ENCODE measurements at regions of chr12 and their contacts with region 1.

Region 1: GRCh38 chr12:120402217-120402616 is 33.3 kb upstream of the MSI1 start:
- DNase-seq: peak in 1 of 2 experiments; percentile 59
- H3K4me3 ChIP-seq: peak overlapping the region in 1 of 4 experiments; percentile 27; a peak in 1 of 8 replicates
- H3K27ac ChIP-seq: no peak overlapping the region
- H3K4me1 ChIP-seq: peaks cover 1 to 13% (median 6%) of the 10 kb centered on the region in 4 experiments
- H3K27me3 ChIP-seq: no peaks in the 10 kb centered on the region
- CTCF ChIP-seq: no peak
- EP300 ChIP-seq: no peak
- POLR2A ChIP-seq: no peak
- RAD21 ChIP-seq: no peak

Region 2: GRCh38 chr12:120249875-120250795 is 152.1 kb before region 1 on chr12:
- CTCF ChIA-PET with region 1: no interaction called
- POLR2A ChIA-PET with region 1: no interaction called
- DNase-seq: no peak
- H3K4me3 ChIP-seq: no peak overlapping the region
- H3K27ac ChIP-seq: no peak overlapping the region
- H3K4me1 ChIP-seq: peaks cover under 1 to 7% (median 2%) of the 10 kb centered on the region in 4 experiments; a peak in 6 of 7 replicates
- H3K27me3 ChIP-seq: no peaks in the 10 kb centered on the region
- CTCF ChIP-seq: no peak
- EP300 ChIP-seq: no peak
- POLR2A ChIP-seq: no peak
- RAD21 ChIP-seq: no peak

Region 3: GRCh38 chr12:120361506-120362208 is 40.6 kb before region 1 on chr12:
- CTCF ChIA-PET with region 1: interaction called, 22 read pairs
- POLR2A ChIA-PET with region 1: interaction called, 18 read pairs
- DNase-seq: peak; percentile 91 to 93
- H3K4me3 ChIP-seq: peak overlapping the region in 3 of 4 experiments; percentile 33 to 53 (median 43); a peak in 5 of 8 replicates
- H3K27ac ChIP-seq: peak overlapping the region; percentile 79
- H3K4me1 ChIP-seq: peaks cover 18 to 36% (median 28%) of the 10 kb centered on the region in 4 experiments
- H3K27me3 ChIP-seq: no peaks in the 10 kb centered on the region
- CTCF ChIP-seq: no peak
- EP300 ChIP-seq: peak in 1 of 2 experiments; percentile 57; a peak in 1 of 3 replicates
- POLR2A ChIP-seq: peak in 1 of 2 experiments; percentile 44; a peak in 1 of 3 replicates
- RAD21 ChIP-seq: peak in 1 of 2 experiments; percentile 1; a peak in 2 of 4 replicates